GM10248 (cell line): ENCODE measurements at regions of chr17 and their contacts with region 1.

Region 1: DNA sequence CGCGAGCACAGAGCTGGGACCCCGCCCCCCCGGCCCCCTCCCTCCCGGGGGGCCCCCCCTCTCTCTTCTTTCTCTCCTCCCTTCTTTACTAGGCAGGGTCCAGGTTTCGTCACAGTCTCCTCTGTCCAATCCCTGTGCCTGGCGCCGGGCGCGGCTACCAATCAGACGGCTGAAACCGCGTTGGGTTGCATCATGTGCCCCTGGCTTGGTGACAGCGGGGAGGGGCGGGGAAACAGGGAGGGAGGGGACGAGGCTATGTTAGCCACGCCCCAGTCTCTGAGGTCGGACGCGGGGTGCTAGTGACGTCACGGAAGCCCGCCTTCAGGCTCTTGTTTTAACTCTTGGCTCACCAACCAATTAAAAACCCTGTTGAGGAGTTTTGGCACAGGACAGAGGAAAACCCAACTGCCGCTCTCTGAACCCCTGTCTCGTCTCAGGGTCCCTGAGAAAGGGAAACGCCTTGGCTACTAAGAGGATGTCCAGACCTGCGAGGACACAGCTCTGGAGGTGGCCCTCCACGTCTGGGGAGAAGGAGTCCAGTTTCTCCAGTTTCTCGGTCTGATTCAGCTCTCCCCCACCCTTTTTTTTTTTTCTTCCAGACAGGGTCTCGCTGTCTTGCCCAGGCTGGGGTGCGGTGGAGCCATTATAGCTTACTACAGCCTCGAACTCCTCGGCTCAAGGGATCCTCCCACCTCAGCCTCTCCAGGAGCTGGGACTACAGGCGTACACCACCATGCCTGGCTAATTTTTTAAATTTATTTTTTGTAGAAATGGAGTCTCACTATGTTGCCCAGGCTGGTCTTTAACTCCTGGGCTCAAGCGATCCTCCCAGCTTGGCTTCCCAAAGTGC is 439 bp upstream of the PLEKHH3 start:
- DNase-seq: peak; percentile 98
- CTCF ChIP-seq: no peak

Region 2: DNA sequence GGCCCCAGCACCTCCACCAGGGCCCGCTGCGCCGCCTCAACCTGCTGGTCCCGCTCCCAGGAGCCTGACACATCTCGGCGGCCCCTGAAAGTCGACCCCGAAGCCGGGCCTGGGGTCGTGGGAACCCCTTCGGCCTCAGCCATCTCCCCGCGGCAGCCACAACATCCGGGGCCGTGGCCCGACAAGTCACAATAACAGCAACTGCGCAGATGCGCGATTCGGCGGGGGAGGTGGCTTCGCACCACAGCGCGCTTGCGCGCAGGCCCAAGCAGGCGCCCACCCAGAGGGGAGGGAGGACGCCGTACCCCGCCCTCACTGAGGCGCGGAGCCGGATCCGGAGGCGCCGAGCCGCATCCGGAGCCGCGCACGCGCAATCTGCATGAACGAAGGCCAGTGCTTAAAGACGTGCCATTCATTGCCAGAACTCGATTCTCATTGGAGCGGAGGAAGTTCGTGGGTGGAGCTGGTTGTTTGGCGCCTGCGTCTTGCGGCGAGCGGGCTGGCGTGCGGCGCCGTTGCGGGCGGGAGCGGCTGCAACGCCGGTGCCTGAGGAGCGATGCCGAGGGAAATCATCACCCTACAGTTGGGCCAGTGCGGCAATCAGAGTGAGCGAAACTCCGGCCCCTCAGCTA is 67.9 kb before region 1 on chr17 and contains the starts of genes RETREG3 and TUBG1:
- CTCF ChIA-PET with region 1: interaction called, 22 read pairs
- POLR2A ChIA-PET with region 1: interaction called, 4 read pairs
- DNase-seq: peak; percentile 100
- CTCF ChIP-seq: no peak

Region 3: DNA sequence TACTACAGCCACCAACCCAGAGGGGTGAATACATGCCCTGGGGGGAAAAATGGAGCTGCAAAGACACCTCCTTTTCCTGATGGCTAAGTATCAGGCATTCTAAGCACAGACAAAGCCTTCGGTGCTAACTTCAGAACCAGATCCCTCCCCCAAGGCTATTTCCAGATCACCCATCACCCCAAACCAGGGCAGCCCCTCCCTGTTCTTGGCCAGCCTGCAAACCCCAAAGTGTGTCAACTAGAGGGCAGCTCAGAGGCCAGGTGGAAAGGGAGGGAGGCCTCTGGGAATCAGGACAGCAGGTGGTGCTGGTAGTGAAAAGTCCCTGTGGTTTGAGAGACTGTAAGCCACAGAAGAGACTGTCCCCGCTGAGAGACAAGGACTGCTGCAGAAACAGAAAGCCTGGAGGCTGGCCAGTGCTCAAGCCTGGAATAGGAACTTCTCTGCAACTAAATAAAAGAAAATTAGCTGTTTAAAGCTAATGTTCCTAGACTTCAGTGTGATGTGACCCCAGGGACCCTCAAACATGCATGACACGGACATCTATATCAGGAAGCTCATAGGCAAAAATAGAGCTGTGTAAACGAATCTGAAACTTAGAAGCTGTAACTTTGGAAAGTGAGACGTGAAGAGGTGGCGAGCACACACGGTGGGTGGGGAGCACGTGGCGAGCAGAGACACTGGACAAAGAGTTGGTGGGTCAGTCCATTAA is 58.6 kb before region 1 on chr17:
- CTCF ChIA-PET with region 1: interaction called, 13 read pairs
- POLR2A ChIA-PET with region 1: no interaction called
- DNase-seq: peak; percentile 79
- CTCF ChIP-seq: peak; percentile 64

Region 4: GRCh38 chr17:42659079-42659931 is 17.9 kb before region 1 on chr17 and contains the start of gene TUBG2:
- CTCF ChIA-PET with region 1: interaction called, 54 read pairs
- POLR2A ChIA-PET with region 1: interaction called, 3 read pairs
- DNase-seq: peak; percentile 90
- CTCF ChIP-seq: no peak

Region 5: GRCh38 chr17:42704837-42705494 is 27.7 kb after region 1 on chr17:
- CTCF ChIA-PET with region 1: interaction called, 10 read pairs
- POLR2A ChIA-PET with region 1: no interaction called
- DNase-seq: peak; percentile 76
- CTCF ChIP-seq: no peak